ENCODE measurements at regions of chr4 and their contacts with region 1.

Region 1: GRCh38 chr4:184263910-184264732 is 46.4 kb upstream of the ENPP6 start:
- DNase-seq: peak; percentile 99
- H3K4me3 Mint-ChIP-seq: no peak overlapping the region
- H3K27ac Mint-ChIP-seq: no peak overlapping the region
- H3K4me1 Mint-ChIP-seq: peaks cover 47% of the 10 kb centered on the region
- H3K27me3 Mint-ChIP-seq: no peaks in the 10 kb centered on the region

Region 2: GRCh38 chr4:183919141-183919540 is 345.0 kb before region 1 on chr4:
- CTCF ChIA-PET with region 1: no interaction called
- intact Hi-C with region 1: no loop called
- DNase-seq: no peak
- H3K4me3 Mint-ChIP-seq: no peak overlapping the region
- H3K27ac Mint-ChIP-seq: no peak overlapping the region
- H3K4me1 Mint-ChIP-seq: no peaks in the 10 kb centered on the region
- H3K27me3 Mint-ChIP-seq: peaks cover 6% of the 10 kb centered on the region

Region 3: GRCh38 chr4:184250795-184251669 is 13.1 kb before region 1 on chr4:
- CTCF ChIA-PET with region 1: interaction called, 52 read pairs
- intact Hi-C with region 1: no loop called
- DNase-seq: peak; percentile 47
- H3K4me3 Mint-ChIP-seq: no peak overlapping the region
- H3K27ac Mint-ChIP-seq: no peak overlapping the region
- H3K4me1 Mint-ChIP-seq: peaks cover 20% of the 10 kb centered on the region
- H3K27me3 Mint-ChIP-seq: no peaks in the 10 kb centered on the region

Region 4: GRCh38 chr4:184318852-184319251 is 54.7 kb after region 1 on chr4:
- CTCF ChIA-PET with region 1: interaction called, 6 read pairs
- intact Hi-C with region 1: loop called (anchors 1 kb)
- DNase-seq: no peak
- H3K4me3 Mint-ChIP-seq: no peak overlapping the region
- H3K27ac Mint-ChIP-seq: no peak overlapping the region
- H3K4me1 Mint-ChIP-seq: peaks cover 36% of the 10 kb centered on the region
- H3K27me3 Mint-ChIP-seq: peaks cover 2% of the 10 kb centered on the region

Region 5: GRCh38 chr4:184459413-184459812 is 195.3 kb after region 1 on chr4:
- CTCF ChIA-PET with region 1: interaction called, 7 read pairs
- intact Hi-C with region 1: loop called (anchors 1 kb)
- DNase-seq: no peak
- H3K4me3 Mint-ChIP-seq: no peak overlapping the region
- H3K27ac Mint-ChIP-seq: peak overlapping the region; percentile 14
- H3K4me1 Mint-ChIP-seq: peaks cover 72% of the 10 kb centered on the region
- H3K27me3 Mint-ChIP-seq: no peaks in the 10 kb centered on the region

Region 6: DNA sequence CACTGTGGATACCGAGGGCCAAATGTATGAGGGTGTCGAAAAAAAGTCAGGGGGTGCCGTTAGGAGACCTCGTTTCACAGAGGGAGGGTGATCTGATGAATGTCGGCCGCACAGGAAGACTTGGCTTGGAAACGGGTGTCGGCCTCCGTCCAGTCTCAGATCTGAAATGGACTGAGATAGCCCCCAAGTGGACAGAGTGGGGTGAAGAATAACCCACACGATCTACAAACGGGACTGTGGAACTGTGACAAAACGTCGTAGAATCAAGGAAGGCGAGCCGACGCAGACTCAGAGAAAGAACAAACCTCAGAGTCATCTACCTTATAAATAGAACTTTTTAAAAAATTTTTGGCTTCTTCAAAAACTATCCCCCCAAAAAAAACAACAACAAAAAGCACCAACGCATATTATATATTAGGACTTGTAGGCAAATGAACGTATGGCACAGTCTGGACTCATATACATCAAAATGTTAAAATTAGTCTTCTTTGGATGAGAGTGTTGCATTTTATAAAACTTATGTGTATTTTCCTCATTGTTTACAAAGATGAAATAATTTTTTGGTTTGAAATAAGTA is 274.0 kb after region 1 on chr4:
- CTCF ChIA-PET with region 1: interaction called, 24 read pairs
- intact Hi-C with region 1: loop called (anchors 1 kb)
- DNase-seq: peak; percentile 79
- H3K4me3 Mint-ChIP-seq: peak overlapping the region; percentile 97
- H3K27ac Mint-ChIP-seq: peak overlapping the region; percentile 96
- H3K4me1 Mint-ChIP-seq: peaks cover 35% of the 10 kb centered on the region
- H3K27me3 Mint-ChIP-seq: no peaks in the 10 kb centered on the region

Region 7: GRCh38 chr4:184745831-184746795 is 482.0 kb after region 1 on chr4:
- CTCF ChIA-PET with region 1: interaction called, 12 read pairs
- intact Hi-C with region 1: loop called (anchors 5 kb)
- DNase-seq: peak; percentile 91
- H3K4me3 Mint-ChIP-seq: no peak overlapping the region
- H3K27ac Mint-ChIP-seq: no peak overlapping the region
- H3K4me1 Mint-ChIP-seq: peaks cover 15% of the 10 kb centered on the region
- H3K27me3 Mint-ChIP-seq: no peaks in the 10 kb centered on the region

Region 8: DNA sequence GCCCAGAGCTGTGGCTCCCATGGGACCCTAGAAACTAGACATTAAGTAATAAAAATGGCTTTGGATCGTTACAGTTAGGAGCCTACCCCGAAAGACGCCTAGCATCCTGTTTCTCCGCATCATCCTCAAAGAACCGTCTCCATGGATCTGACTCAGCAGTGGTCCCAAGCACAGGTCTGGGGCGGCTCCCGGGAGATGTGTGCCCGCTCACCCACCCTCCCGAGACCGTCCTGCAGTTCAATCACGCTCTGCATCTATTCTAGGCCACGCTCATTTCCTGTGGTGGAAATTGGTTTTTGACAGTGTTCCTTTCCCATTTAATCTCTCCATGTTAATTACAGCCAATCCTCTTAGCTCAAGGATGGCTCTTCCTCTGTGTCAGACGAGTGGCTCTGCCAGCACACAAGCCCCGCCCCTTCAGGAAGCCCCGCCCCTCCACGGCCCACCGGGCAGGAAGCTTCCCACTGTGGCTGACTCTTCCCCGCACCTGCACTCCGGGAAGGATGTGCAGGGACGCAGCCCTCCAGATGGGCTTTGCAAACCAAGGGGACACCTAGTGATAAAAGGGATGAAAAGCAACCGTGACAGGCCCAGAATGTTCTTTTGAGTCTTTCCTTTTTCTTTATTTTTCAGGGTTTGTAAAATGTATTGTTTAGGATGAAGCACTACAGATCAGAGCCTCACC is 719.7 kb after region 1 on chr4:
- CTCF ChIA-PET with region 1: no interaction called
- intact Hi-C with region 1: loop called (anchors 1 kb)
- DNase-seq: peak; percentile 83
- H3K4me3 Mint-ChIP-seq: no peak overlapping the region
- H3K27ac Mint-ChIP-seq: no peak overlapping the region
- H3K4me1 Mint-ChIP-seq: no peaks in the 10 kb centered on the region
- H3K27me3 Mint-ChIP-seq: no peaks in the 10 kb centered on the region

Measured in activated naive CD4-positive, alpha-beta T cell treated with anti-CD3 and anti-CD28 coated beads for 36 hours (primary cell).